ENCODE measurements at regions of chr9 and their contacts with region 1.

Region 1: GRCh38 chr9:89602978-89603766 is 1.6 kb upstream of the GADD45G start:
- DNase-seq: peak; percentile 86 to 95
- H3K4me3 ChIP-seq: peak overlapping the region; percentile 3 to 86 (median 64); a peak in 7 of 8 replicates
- H3K27ac ChIP-seq: no peak overlapping the region
- H3K4me1 ChIP-seq: peaks cover 0 to 13% (median 9%) of the 10 kb centered on the region in 4 experiments; a peak in 5 of 7 replicates
- H3K27me3 ChIP-seq: peaks cover 0 to 18% (median 13%) of the 10 kb centered on the region in 4 experiments; a peak in 5 of 7 replicates
- CTCF ChIP-seq: peak; percentile 74 to 96 (median 86)
- EP300 ChIP-seq: no peak
- POLR2A ChIP-seq: no peak
- RAD21 ChIP-seq: peak; percentile 96 to 98

Region 2: DNA sequence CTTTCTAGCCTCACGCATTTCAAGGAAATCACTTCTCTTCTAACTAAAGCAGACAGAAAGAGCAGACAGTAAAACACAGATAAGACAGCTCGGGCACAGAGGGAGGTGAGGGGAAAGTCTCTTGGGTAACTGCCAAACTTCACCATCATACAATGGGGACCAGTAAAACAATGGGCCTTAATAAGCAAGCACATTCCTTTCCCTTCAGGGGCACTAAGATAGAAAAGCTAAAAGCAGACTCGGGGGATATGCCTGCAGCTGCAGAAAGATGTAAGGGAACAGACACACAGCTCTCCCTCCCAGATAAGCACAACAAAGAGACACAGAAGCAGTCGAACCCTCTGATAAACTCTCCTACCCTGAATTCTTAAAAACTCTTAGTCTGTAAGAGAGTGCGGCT is 307.8 kb before region 1 on chr9:
- CTCF ChIA-PET with region 1: no interaction called
- POLR2A ChIA-PET with region 1: no interaction called
- DNase-seq: no peak
- H3K4me3 ChIP-seq: peak overlapping the region in 1 of 4 experiments; percentile 20; a peak in 1 of 8 replicates
- H3K27ac ChIP-seq: no peak overlapping the region
- H3K4me1 ChIP-seq: no peaks in the 10 kb centered on the region; a peak in 2 of 7 replicates
- H3K27me3 ChIP-seq: no peaks in the 10 kb centered on the region
- CTCF ChIP-seq: no peak
- EP300 ChIP-seq: no peak
- POLR2A ChIP-seq: no peak
- RAD21 ChIP-seq: no peak

Region 3: DNA sequence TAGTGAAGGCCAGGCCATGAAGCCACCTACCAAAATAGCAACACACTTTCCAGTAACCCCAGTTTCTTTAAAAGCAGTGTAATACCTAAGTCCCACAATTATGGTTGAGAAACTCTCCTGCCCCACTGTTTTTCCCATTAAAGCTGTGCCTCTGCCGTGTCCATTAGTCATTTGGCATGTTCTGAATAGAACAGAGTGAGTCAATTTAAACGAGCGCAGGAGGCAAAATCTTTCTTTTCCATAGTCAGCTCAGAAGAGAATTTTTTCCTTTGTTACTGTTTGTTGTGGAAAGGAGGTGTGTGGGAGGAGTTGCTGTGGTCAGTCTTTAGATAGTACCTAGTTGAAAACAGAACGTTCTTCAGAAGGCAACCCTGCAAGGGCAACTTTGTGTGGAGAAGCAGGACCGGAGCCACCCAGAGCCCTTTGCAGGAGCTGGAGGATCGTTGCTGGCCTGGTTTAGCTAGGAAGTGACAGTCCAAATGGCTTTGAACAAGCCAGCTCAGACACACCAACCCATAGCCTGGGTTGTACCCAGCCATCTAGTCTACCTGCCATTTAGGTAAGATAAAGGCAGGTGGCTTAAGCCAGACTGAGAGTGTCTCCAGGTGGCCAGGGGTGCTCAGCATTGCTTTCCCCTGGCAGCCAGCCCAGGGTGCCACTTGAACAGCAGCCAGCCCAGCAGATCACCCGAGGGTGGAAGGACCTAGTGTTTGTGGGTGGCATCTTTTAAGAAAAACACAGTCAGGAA is 32.0 kb after region 1 on chr9:
- CTCF ChIA-PET with region 1: interaction called, 9 read pairs
- POLR2A ChIA-PET with region 1: interaction called, 10 read pairs
- DNase-seq: no peak
- H3K4me3 ChIP-seq: no peak overlapping the region
- H3K27ac ChIP-seq: no peak overlapping the region
- H3K4me1 ChIP-seq: peaks cover 0 to 5% (median 0%) of the 10 kb centered on the region in 4 experiments; a peak in 4 of 7 replicates
- H3K27me3 ChIP-seq: peaks cover 0 to 2% (median 0%) of the 10 kb centered on the region in 4 experiments; a peak in 2 of 7 replicates
- CTCF ChIP-seq: no peak
- EP300 ChIP-seq: no peak
- POLR2A ChIP-seq: no peak
- RAD21 ChIP-seq: no peak

Region 4: DNA sequence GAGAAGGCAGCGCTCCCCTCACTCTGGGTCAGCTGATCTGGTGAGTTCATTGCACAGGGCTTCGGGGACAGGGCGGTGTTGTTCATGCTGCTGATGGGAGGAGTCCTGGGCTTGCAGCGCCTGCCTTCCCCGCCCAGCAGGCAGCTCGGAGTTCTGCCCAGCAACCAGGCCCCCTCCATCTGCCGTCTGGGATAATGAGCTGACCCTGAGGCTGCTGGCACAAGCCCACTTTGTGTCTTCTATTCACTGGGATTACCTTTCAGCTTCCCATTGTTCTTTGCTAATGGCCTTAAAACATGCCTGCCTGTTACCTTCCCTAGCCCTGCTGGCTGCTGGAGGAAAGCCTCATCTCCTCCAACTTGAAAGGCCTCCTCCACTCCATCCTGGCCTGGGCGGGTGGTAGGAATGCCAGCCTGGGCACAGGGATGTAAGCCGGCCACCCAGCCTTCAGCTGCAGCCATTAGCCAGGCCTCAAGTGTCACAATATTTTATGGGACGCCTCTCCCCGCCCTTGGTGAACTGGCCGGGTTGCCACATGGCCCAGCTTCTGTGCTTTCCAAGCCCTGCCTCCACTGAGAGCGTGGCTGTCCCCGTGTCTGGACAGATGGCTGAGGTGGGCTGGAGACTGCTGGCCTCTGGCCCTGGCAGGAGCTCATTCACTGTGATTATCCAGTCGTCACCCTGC is 72.0 kb after region 1 on chr9:
- CTCF ChIA-PET with region 1: interaction called, 20 read pairs
- POLR2A ChIA-PET with region 1: interaction called, 89 read pairs
- DNase-seq: peak in 1 of 2 experiments; percentile 70
- H3K4me3 ChIP-seq: no peak overlapping the region
- H3K27ac ChIP-seq: no peak overlapping the region; the same call in 1 of the 2 replicates
- H3K4me1 ChIP-seq: peaks cover 23 to 50% (median 42%) of the 10 kb centered on the region in 4 experiments
- H3K27me3 ChIP-seq: peaks cover 0 to 23% (median 11%) of the 10 kb centered on the region in 4 experiments; a peak in 5 of 7 replicates
- CTCF ChIP-seq: no peak
- EP300 ChIP-seq: no peak
- POLR2A ChIP-seq: no peak
- RAD21 ChIP-seq: no peak

Region 5: DNA sequence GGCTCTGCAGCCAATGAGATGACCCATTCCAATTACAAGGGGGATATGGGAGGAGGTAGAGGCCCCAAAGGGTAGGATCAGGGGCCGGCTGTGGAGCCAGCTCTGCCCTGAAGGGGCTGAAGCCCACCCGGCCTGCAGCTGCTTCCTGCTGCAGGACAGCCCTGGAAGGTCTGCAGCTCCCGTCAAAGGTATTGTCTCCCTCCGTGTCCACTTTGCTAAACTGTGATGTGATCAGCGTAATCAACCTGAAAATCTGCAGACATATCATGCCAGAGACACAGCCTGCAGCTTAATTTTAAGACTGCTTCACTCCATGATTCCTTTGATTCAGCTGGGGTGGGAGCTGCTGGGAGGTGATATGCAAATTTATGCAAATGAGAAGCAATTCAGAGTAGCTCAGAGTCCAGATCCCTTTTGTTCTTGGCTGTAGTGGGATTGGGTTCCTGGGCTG is 92.3 kb after region 1 on chr9:
- CTCF ChIA-PET with region 1: interaction called, 14 read pairs
- POLR2A ChIA-PET with region 1: interaction called, 12 read pairs
- DNase-seq: peak in 1 of 2 experiments; percentile 60
- H3K4me3 ChIP-seq: peak overlapping the region in 2 of 4 experiments; percentile 9 to 31; a peak in 2 of 8 replicates
- H3K27ac ChIP-seq: no peak overlapping the region
- H3K4me1 ChIP-seq: peaks cover 3 to 15% (median 6%) of the 10 kb centered on the region in 4 experiments; a peak in 6 of 7 replicates
- H3K27me3 ChIP-seq: no peaks in the 10 kb centered on the region
- CTCF ChIP-seq: no peak
- EP300 ChIP-seq: no peak
- POLR2A ChIP-seq: peak in 1 of 2 experiments; percentile 52; a peak in 1 of 3 replicates
- RAD21 ChIP-seq: no peak; a peak in 1 of 4 replicates

Region 6: GRCh38 chr9:89750147-89750861 is 147.1 kb after region 1 on chr9:
- CTCF ChIA-PET with region 1: interaction called, 10 read pairs
- POLR2A ChIA-PET with region 1: interaction called, 13 read pairs
- DNase-seq: no peak
- H3K4me3 ChIP-seq: no peak overlapping the region
- H3K27ac ChIP-seq: no peak overlapping the region
- H3K4me1 ChIP-seq: peaks cover 0 to 11% (median 3%) of the 10 kb centered on the region in 4 experiments; a peak in 4 of 7 replicates
- H3K27me3 ChIP-seq: no peaks in the 10 kb centered on the region
- CTCF ChIP-seq: no peak
- EP300 ChIP-seq: no peak
- POLR2A ChIP-seq: no peak
- RAD21 ChIP-seq: no peak

Region 7: GRCh38 chr9:89919169-89919681 is 316.1 kb after region 1 on chr9:
- CTCF ChIA-PET with region 1: interaction called, 45 read pairs
- POLR2A ChIA-PET with region 1: interaction called, 6 read pairs
- DNase-seq: peak; percentile 49 to 86
- H3K4me3 ChIP-seq: no peak overlapping the region
- H3K27ac ChIP-seq: no peak overlapping the region
- H3K4me1 ChIP-seq: peaks cover 0 to 4% (median 0%) of the 10 kb centered on the region in 4 experiments; a peak in 1 of 7 replicates
- H3K27me3 ChIP-seq: no peaks in the 10 kb centered on the region; a peak in 1 of 7 replicates
- CTCF ChIP-seq: peak; percentile 55 to 83 (median 77)
- EP300 ChIP-seq: no peak
- POLR2A ChIP-seq: no peak
- RAD21 ChIP-seq: peak; percentile 48 to 60

Region 8: GRCh38 chr9:90102292-90102901 is 499.2 kb after region 1 on chr9:
- CTCF ChIA-PET with region 1: interaction called, 162 read pairs
- POLR2A ChIA-PET with region 1: interaction called, 6 read pairs
- DNase-seq: peak; percentile 53 to 70
- H3K4me3 ChIP-seq: no peak overlapping the region
- H3K27ac ChIP-seq: no peak overlapping the region
- H3K4me1 ChIP-seq: no peaks in the 10 kb centered on the region
- H3K27me3 ChIP-seq: no peaks in the 10 kb centered on the region; a peak in 2 of 7 replicates
- CTCF ChIP-seq: peak; percentile 76 to 92 (median 86)
- EP300 ChIP-seq: no peak
- POLR2A ChIP-seq: no peak
- RAD21 ChIP-seq: peak; percentile 97 to 98

Measured in H1 (cell line).